ENCODE measurements at regions of chr10 and their contacts with region 1.

Region 1: GRCh38 chr10:102114861-102115618 is 5.1 kb downstream of the LDB1 start:
- DNase-seq: peak; percentile 93
- H3K4me3 Mint-ChIP-seq: peak overlapping the region; percentile 92
- H3K27ac Mint-ChIP-seq: peak overlapping the region; percentile 92
- H3K4me1 Mint-ChIP-seq: peaks cover 59% of the 10 kb centered on the region
- H3K27me3 Mint-ChIP-seq: no peaks in the 10 kb centered on the region
- CTCF ChIP-seq: no peak

Region 2: GRCh38 chr10:102064868-102065560 is 50.0 kb before region 1 on chr10 and contains the start of gene HPS6:
- CTCF ChIA-PET with region 1: no interaction called
- POLR2A ChIA-PET with region 1: interaction called, 25 read pairs
- intact Hi-C with region 1: no loop called
- DNase-seq: peak; percentile 93
- H3K4me3 Mint-ChIP-seq: peak within 1 kb of the TSS; percentile 83
- H3K27ac Mint-ChIP-seq: peak within 1 kb of the TSS; percentile 83
- H3K4me1 Mint-ChIP-seq: peaks cover 16% of the 10 kb centered on the region
- H3K27me3 Mint-ChIP-seq: no peaks in the 10 kb centered on the region
- CTCF ChIP-seq: no peak
- total RNA-seq, gene HPS6: 15.0 and 16.6 TPM in 2 replicates

Region 3: GRCh38 chr10:102101152-102101551 is 13.9 kb before region 1 on chr10:
- CTCF ChIA-PET with region 1: interaction called, 5 read pairs
- POLR2A ChIA-PET with region 1: interaction called, 33 read pairs
- intact Hi-C with region 1: no loop called
- DNase-seq: peak; percentile 44
- H3K4me3 Mint-ChIP-seq: no peak overlapping the region
- H3K27ac Mint-ChIP-seq: no peak overlapping the region
- H3K4me1 Mint-ChIP-seq: no peaks in the 10 kb centered on the region
- H3K27me3 Mint-ChIP-seq: no peaks in the 10 kb centered on the region
- CTCF ChIP-seq: no peak

Region 4: GRCh38 chr10:102132563-102133372 is 17.7 kb after region 1 on chr10 and contains the start of gene PPRC1:
- CTCF ChIA-PET with region 1: interaction called, 9 read pairs
- POLR2A ChIA-PET with region 1: interaction called, 24 read pairs
- intact Hi-C with region 1: no loop called
- DNase-seq: peak; percentile 99
- H3K4me3 Mint-ChIP-seq: peak within 1 kb of the TSS; percentile 93
- H3K27ac Mint-ChIP-seq: peak within 1 kb of the TSS; percentile 96
- H3K4me1 Mint-ChIP-seq: peaks cover 37% of the 10 kb centered on the region
- H3K27me3 Mint-ChIP-seq: no peaks in the 10 kb centered on the region
- CTCF ChIP-seq: peak; percentile 65
- total RNA-seq, gene PPRC1: 50.4 and 68.2 TPM in 2 replicates

Region 5: GRCh38 chr10:102151774-102152544 is 36.9 kb after region 1 on chr10 and contains the start of gene NOLC1:
- CTCF ChIA-PET with region 1: no interaction called
- POLR2A ChIA-PET with region 1: interaction called, 25 read pairs
- intact Hi-C with region 1: no loop called
- DNase-seq: peak; percentile 98
- H3K4me3 Mint-ChIP-seq: peak within 1 kb of the TSS; percentile 75
- H3K27ac Mint-ChIP-seq: peak within 1 kb of the TSS; percentile 92
- H3K4me1 Mint-ChIP-seq: peaks cover 14% of the 10 kb centered on the region
- H3K27me3 Mint-ChIP-seq: no peaks in the 10 kb centered on the region
- CTCF ChIP-seq: no peak
- total RNA-seq, gene NOLC1: 122 and 168 TPM in 2 replicates